ENCODE measurements at regions of chr1 and their contacts with region 1.

Region 1: DNA sequence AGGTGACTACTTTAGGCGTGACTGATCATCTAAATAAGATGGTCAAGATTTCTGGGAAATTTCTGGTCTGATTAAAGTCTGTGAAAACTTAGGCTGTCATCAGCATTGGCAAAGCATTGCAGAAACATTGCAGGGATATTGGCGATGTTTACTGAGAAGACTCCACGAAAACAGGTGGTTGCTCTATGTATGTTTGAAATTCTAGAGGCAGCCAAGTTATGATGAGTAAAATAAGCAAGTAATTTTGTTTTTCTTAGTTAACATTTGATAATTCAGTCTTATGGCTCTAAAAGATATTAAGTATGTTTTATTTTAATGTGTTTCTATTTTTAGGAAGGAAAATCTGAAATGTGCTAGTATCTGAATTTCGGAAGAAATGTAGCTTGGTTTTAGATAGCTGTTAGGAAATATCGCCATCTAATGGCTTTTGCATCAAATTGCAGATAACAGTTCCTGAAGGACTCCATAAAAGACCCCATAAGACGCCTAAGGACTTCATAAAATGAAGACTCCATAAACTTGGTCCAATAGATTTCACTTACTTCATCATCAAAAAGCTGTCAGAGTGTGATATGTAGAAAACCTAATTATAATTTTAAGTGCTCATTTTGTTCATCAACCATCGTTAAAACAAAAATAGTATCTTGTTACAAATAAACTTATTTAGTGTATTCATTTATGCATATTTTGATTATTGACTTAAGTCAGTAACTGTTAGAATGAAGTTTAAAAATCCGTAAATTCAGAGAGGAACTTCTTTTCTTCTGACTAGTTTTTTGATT is 344.6 kb downstream of the RYR2 start:
- DNase-seq: peak; percentile 48
- H3K4me3 ChIP-seq: no peak overlapping the region
- H3K27ac ChIP-seq: no peak overlapping the region
- H3K4me1 ChIP-seq: no peaks in the 10 kb centered on the region; the same call in 1 of the 2 replicates
- H3K27me3 ChIP-seq: no peaks in the 10 kb centered on the region

Region 2: DNA sequence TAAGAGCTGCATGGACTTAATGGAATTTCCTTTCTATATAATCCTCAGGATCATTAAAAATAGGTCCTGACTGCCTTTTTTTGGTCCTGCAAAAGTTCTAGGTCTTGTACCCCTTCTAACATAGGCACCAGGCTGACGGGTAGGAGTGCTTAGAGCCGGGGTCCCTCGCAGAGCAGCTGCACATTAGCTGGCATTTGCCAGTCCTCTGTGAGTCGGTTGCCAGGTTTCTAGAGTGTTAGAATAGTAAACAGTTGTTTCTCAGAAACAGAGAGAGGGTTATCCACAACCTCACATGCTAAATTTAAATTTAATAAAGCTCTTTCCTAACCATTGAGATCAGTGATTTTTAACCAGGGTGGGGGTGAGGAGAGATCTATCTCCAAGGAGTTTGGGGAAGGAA is 746.9 kb before region 1 on chr1:
- in situ Hi-C with region 1: loop called (anchors 25 kb)
- DNase-seq: no peak
- H3K4me3 ChIP-seq: no peak overlapping the region
- H3K27ac ChIP-seq: no peak overlapping the region
- H3K4me1 ChIP-seq: no peaks in the 10 kb centered on the region
- H3K27me3 ChIP-seq: no peaks in the 10 kb centered on the region

Region 3: DNA sequence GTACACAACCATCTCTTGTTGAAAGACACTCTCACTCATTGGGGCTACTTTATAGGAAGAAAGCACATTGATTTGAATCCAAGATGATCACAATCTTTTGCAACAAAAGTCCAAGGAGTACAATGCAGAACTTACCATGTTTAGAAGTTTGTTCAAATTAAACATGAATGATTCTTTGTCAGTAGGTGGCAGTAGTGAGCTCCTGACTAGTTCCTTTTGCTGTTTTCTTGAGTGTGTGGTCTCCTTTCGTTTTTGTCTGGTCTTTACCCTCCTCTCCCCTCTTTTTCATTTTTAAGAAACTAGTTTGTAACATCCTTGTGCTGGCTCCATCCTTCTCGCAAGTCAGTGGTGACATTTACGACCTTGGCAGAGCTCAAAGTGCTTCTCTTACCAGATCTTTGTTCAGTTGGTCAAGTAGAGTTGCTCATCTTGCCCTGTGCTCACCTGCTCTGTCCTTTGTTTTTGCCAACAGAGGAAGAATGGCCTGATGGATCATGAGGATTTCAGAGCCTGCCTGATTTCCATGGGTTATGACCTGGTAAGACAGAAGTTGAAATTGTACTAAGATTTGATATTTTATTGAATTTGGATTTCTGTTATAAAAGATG is 627.2 kb before region 1 on chr1:
- in situ Hi-C with region 1: loop called (anchors 10 kb)
- DNase-seq: peak; percentile 56
- H3K4me3 ChIP-seq: no peak overlapping the region
- H3K27ac ChIP-seq: no peak overlapping the region
- H3K4me1 ChIP-seq: peaks cover 5% of the 10 kb centered on the region; the same call in 1 of the 2 replicates
- H3K27me3 ChIP-seq: no peaks in the 10 kb centered on the region

Measured in GM23248 (cell line).